ENCODE measurements at regions of chr17 and their contacts with region 1.

Region 1: GRCh38 chr17:73311781-73312641 is at the start of gene CDC42EP4:
- DNase-seq: peak; percentile 98
- H3K4me3 ChIP-seq: peak within 1 kb of the TSS; percentile 78 to 100 (median 95)
- H3K27ac ChIP-seq: peak within 1 kb of the TSS; percentile 93 to 100 (median 99)
- H3K4me1 ChIP-seq: peaks cover 37 to 44% (median 42%) of the 10 kb centered on the region in 4 donors
- H3K27me3 ChIP-seq: peaks cover 0 to 9% (median 0%) of the 10 kb centered on the region in 4 donors
- CTCF ChIP-seq: peak in 1 of 3 experiments; percentile 9
- EP300 ChIP-seq: no peak
- POLR2A ChIP-seq: peak; percentile 95
- total RNA-seq, gene CDC42EP4: 48.6 to 129 (median 104) TPM

Region 2: GRCh38 chr17:73278465-73279453 is 33.3 kb before region 1 on chr17:
- intact Hi-C with region 1: loop called (anchors 1 kb)
- DNase-seq: no peak
- H3K4me3 ChIP-seq: peak overlapping the region in 3 of 4 donors; percentile 3 to 5 (median 4)
- H3K27ac ChIP-seq: peak overlapping the region; percentile 74 to 85 (median 80)
- H3K4me1 ChIP-seq: peaks cover 38 to 58% (median 43%) of the 10 kb centered on the region in 4 donors
- H3K27me3 ChIP-seq: no peaks in the 10 kb centered on the region
- CTCF ChIP-seq: no peak
- EP300 ChIP-seq: no peak
- POLR2A ChIP-seq: no peak

Region 3: DNA sequence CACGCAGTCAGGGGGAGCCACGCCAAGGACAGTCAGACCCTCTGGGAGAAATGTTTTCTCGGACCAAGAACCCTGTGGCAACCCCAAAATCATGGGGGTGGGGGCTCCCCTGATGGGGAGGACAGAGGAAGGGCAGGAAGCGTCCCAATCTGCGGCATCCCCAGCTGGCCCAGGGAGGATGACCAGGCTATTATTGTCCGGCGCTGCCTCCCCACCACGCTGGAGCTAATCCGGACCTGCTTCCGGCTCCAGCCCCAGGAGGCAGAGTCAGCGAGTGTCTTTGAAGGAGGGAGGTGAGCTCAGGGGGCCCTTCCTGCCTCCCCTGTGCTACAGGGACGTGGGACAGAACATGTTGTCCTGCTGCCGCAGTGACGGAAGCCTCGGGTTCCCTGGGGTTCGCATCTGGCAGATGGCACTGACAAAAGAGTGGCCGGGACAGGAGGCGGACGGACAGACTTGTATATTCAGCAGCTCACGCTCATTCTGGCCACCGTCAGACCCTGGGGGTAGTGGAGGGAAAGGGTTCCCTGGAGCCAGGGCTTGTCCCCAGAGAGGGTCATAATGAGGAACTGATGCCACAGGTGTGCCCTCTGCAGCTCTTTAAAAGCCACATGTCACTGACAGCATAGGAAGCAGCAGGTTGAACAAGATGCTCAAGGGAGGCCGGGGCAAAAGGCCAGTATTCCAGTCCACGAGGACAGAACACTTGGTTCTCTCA is 54.1 kb after region 1 on chr17:
- intact Hi-C with region 1: loop called (anchors 5 kb)
- DNase-seq: no peak
- H3K4me3 ChIP-seq: no peak overlapping the region
- H3K27ac ChIP-seq: peak overlapping the region; percentile 47 to 66 (median 48)
- H3K4me1 ChIP-seq: peaks cover 11 to 27% (median 16%) of the 10 kb centered on the region in 4 donors
- H3K27me3 ChIP-seq: peaks cover 0 to 8% (median 0%) of the 10 kb centered on the region in 4 donors
- CTCF ChIP-seq: no peak
- EP300 ChIP-seq: peak; percentile 64
- POLR2A ChIP-seq: no peak

Measured in esophagus muscularis mucosa (tissue), 4 donors.